Natural killer cell (primary cell): ENCODE measurements at regions of chr11 and their contacts with region 1.

Region 1: GRCh38 chr11:65817835-65818742 is 15.7 kb upstream of the SNX32 start:
- DNase-seq: peak; percentile 96 to 98
- ATAC-seq: peak; percentile 98 to 100 (median 98)
- H3K4me3 ChIP-seq: peak overlapping the region; percentile 33
- H3K4me3 Mint-ChIP-seq: peak overlapping the region; percentile 93
- H3K27ac ChIP-seq: peak overlapping the region; percentile 52
- H3K27ac Mint-ChIP-seq: peak overlapping the region; percentile 51 to 69
- H3K4me1 ChIP-seq: peaks cover 14% of the 10 kb centered on the region
- H3K4me1 Mint-ChIP-seq: peaks cover 14% of the 10 kb centered on the region in 2 donors
- H3K27me3 ChIP-seq: no peaks in the 10 kb centered on the region
- H3K27me3 Mint-ChIP-seq: no peaks in the 10 kb centered on the region
- CTCF ChIP-seq: peak; percentile 100

Region 2: DNA sequence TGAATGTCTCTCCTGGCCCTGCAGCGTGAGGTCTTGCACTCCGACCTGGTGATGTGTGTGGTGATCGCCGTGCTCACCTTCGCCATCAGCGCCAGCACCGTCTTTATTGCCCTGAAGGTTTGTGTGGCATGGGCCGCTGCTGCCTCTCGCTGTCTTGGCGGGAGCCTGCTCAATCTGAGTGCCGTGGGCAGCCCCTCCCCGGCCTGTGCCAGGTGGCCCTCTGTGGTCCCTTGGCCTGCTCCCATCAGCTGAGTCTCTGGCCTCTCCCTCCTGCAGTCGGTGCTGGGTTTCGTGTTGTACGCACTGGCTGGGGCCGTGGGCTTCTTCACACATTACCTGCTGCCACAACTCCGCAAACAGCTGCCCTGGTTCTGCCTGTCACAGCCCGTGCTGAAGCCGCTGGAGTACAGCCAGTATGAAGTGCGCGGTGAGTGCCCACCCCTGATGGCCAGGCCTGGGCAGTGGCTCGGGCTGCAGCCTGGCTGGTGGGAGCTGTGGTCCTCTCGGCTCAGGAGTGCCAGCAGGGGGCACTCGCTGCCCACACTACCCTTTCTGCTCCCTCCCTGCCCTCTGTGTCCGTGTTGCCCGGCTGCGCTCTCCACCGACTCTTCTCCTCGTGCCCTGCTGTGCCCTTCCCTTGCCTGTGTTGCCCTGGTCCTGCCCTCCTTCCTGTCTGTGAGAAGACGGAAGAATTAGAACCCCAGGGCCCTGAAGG is 192.3 kb before region 1 on chr11:
- intact Hi-C with region 1: loop called (anchors 5 kb)
- DNase-seq: peak; percentile 71 to 84
- ATAC-seq: peak; percentile 87 to 97 (median 91)
- H3K4me3 ChIP-seq: no peak overlapping the region
- H3K4me3 Mint-ChIP-seq: no peak overlapping the region
- H3K27ac ChIP-seq: no peak overlapping the region
- H3K27ac Mint-ChIP-seq: peak overlapping the region; percentile 63 to 66
- H3K4me1 ChIP-seq: peaks cover 10% of the 10 kb centered on the region
- H3K4me1 Mint-ChIP-seq: peaks cover 7 to 20% of the 10 kb centered on the region in 2 donors
- H3K27me3 ChIP-seq: no peaks in the 10 kb centered on the region
- H3K27me3 Mint-ChIP-seq: no peaks in the 10 kb centered on the region
- CTCF ChIP-seq: peak; percentile 78

Region 3: GRCh38 chr11:65711785-65712632 is 106.1 kb before region 1 on chr11 and contains the start of gene KAT5:
- intact Hi-C with region 1: loop called (anchors 1 kb)
- DNase-seq: peak; percentile 99
- ATAC-seq: peak; percentile 84 to 90 (median 85)
- H3K4me3 ChIP-seq: peak within 1 kb of the TSS; percentile 95
- H3K4me3 Mint-ChIP-seq: peak within 1 kb of the TSS; percentile 94
- H3K27ac ChIP-seq: peak within 1 kb of the TSS; percentile 99
- H3K27ac Mint-ChIP-seq: peak within 1 kb of the TSS; percentile 95 to 99
- H3K4me1 ChIP-seq: peaks cover 17% of the 10 kb centered on the region
- H3K4me1 Mint-ChIP-seq: peaks cover 0 to 22% of the 10 kb centered on the region in 2 donors
- H3K27me3 ChIP-seq: no peaks in the 10 kb centered on the region
- H3K27me3 Mint-ChIP-seq: no peaks in the 10 kb centered on the region
- CTCF ChIP-seq: peak; percentile 94
- total RNA-seq, gene KAT5: 140 to 155 (median 146) TPM

Region 4: GRCh38 chr11:65773784-65774411 is 44.2 kb before region 1 on chr11:
- intact Hi-C with region 1: loop called (anchors 1 kb)
- DNase-seq: no peak
- ATAC-seq: no peak
- H3K4me3 ChIP-seq: no peak overlapping the region
- H3K4me3 Mint-ChIP-seq: no peak overlapping the region
- H3K27ac ChIP-seq: no peak overlapping the region
- H3K27ac Mint-ChIP-seq: no peak overlapping the region
- H3K4me1 ChIP-seq: peaks cover 13% of the 10 kb centered on the region
- H3K4me1 Mint-ChIP-seq: peaks cover 6 to 11% of the 10 kb centered on the region in 2 donors
- H3K27me3 ChIP-seq: no peaks in the 10 kb centered on the region
- H3K27me3 Mint-ChIP-seq: no peaks in the 10 kb centered on the region
- CTCF ChIP-seq: no peak

Region 5: GRCh38 chr11:65779851-65780577 is 38.1 kb before region 1 on chr11:
- intact Hi-C with region 1: loop called (anchors 2 kb)
- DNase-seq: peak; percentile 73 to 86
- ATAC-seq: peak; percentile 61 to 89 (median 76)
- H3K4me3 ChIP-seq: peak overlapping the region; percentile 84
- H3K4me3 Mint-ChIP-seq: peak overlapping the region; percentile 86
- H3K27ac ChIP-seq: peak overlapping the region; percentile 50
- H3K27ac Mint-ChIP-seq: peak overlapping the region; percentile 45 to 90
- H3K4me1 ChIP-seq: peaks cover 27% of the 10 kb centered on the region
- H3K4me1 Mint-ChIP-seq: peaks cover 6 to 17% of the 10 kb centered on the region in 2 donors
- H3K27me3 ChIP-seq: no peaks in the 10 kb centered on the region
- H3K27me3 Mint-ChIP-seq: peaks cover under 1 to 7% of the 10 kb centered on the region in 2 donors
- CTCF ChIP-seq: peak; percentile 91